ENCODE measurements at regions of chr17 and their contacts with region 1.

Region 1: DNA sequence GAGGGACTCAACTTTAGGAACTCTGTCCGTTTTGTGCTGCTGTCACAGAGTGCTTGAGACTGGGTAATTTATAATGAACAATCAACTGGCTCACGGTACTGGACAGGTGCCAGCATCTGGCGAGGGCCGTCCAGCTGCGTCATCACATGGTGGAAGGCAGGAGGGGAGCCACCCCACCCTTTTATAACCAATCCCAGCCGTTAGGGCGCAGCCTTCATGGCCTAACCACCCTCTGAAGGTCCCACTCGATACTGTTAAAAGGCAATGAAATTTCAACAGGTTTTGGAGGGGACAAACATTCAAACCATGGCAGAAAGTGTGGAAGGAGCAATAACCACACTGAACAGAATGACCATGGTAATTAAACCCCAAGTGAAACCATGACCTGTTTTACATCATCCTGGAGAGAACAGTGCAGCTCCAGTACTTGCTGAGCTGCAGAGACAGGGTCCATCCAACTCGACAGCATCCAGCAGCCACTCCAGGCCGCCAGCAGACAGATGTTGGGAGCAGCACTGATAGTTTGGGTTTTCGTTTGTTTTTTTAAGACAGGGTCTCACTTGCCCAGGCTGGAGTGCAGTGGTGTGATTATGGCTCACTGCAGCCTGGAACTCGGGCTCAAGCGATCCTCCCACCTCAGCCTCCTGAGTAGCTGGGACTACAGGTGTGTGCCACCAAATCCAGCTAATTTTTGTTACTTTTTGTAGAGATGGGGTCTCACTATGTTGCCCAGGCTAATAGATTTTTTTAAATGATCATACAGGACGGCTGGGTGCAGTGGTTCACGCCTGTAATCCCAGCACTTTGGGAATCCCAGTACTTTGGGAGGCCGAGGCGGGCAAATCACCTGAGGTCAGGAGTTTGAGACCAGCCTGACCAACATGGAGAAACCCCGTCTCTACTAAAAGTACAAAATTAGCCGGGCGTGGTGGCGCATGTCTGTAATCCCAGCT is 11.0 kb downstream of the CHMP6 start:
- DNase-seq: peak; percentile 79 to 84 (median 82)
- ATAC-seq: peak; percentile 71
- H3K4me3 ChIP-seq: no peak overlapping the region
- H3K27ac ChIP-seq: peak overlapping the region; percentile 44
- H3K4me1 ChIP-seq: peaks cover 19 to 60% of the 10 kb centered on the region in 2 experiments
- H3K27me3 ChIP-seq: no peaks in the 10 kb centered on the region
- CTCF ChIP-seq: no peak
- EP300 ChIP-seq: no peak
- POLR2A ChIP-seq: 0 out of 2 replicates have a peak, but pooled peaks have one; percentile 39
- RAD21 ChIP-seq: no peak

Region 2: GRCh38 chr17:80414508-80414802 is 588.2 kb before region 1 on chr17:
- CTCF ChIA-PET with region 1: no interaction called
- POLR2A ChIA-PET with region 1: no interaction called
- in situ Hi-C with region 1: no loop called
- intact Hi-C with region 1: no loop called
- DNase-seq: peak; percentile 26 to 38 (median 31)
- ATAC-seq: peak; percentile 22
- H3K4me3 ChIP-seq: peak overlapping the region; percentile 59
- H3K27ac ChIP-seq: no peak overlapping the region
- H3K4me1 ChIP-seq: peaks cover 3 to 19% of the 10 kb centered on the region in 2 experiments; a peak in 4 of 5 replicates
- H3K27me3 ChIP-seq: peaks cover 7 to 16% of the 10 kb centered on the region in 2 experiments; a peak in 4 of 5 replicates
- CTCF ChIP-seq: peak; percentile 26 to 35 (median 34); a peak in 3 of 6 replicates
- EP300 ChIP-seq: no peak
- POLR2A ChIP-seq: no peak
- RAD21 ChIP-seq: peak in 1 of 2 experiments; percentile 38; a peak in 1 of 4 replicates

Region 3: GRCh38 chr17:81018044-81018802 is 15.5 kb after region 1 on chr17:
- CTCF ChIA-PET with region 1: no interaction called
- POLR2A ChIA-PET with region 1: interaction called, 13 read pairs
- in situ Hi-C with region 1: no loop called
- intact Hi-C with region 1: loop called (anchors 1 kb)
- DNase-seq: peak; percentile 55 to 92 (median 74)
- ATAC-seq: peak; percentile 92
- H3K4me3 ChIP-seq: peak overlapping the region; percentile 53
- H3K27ac ChIP-seq: peak overlapping the region; percentile 92
- H3K4me1 ChIP-seq: peaks cover 41 to 46% of the 10 kb centered on the region in 2 experiments
- H3K27me3 ChIP-seq: no peaks in the 10 kb centered on the region
- CTCF ChIP-seq: no peak
- EP300 ChIP-seq: peak; percentile 84
- POLR2A ChIP-seq: peak; percentile 86
- RAD21 ChIP-seq: no peak

Region 4: DNA sequence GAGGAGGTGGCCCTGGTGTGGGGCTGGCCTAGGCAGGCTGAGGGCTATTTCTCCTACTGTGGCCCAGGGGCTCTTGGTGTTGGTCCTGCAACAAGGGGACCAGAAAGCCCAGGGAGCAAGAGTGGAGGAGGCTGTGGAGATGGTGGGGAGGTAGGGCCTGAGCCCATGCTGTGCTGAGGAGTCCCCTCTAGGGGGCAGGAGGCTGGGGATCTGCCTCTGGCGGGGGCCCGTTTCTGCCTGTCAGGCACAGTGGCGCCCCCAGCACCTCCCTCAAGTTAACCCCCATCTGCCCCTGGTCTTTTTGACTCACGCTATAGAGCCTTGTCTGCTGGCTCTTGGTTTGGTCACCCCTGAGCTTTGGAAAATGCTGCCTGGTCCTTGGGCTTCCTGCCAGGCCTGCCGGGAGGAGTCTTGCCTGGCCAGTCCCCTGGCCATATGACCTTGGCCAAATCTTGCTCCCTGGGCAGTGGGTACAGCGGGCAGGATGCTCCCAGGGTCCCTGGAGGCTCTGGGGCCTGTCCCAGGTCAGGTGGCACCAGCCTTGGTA is 38.2 kb after region 1 on chr17:
- CTCF ChIA-PET with region 1: no interaction called
- POLR2A ChIA-PET with region 1: no interaction called
- in situ Hi-C with region 1: no loop called
- intact Hi-C with region 1: no loop called
- DNase-seq: peak; percentile 65 to 83 (median 72)
- ATAC-seq: peak; percentile 95
- H3K4me3 ChIP-seq: no peak overlapping the region; the same call in 1 of the 2 replicates
- H3K27ac ChIP-seq: no peak overlapping the region
- H3K4me1 ChIP-seq: peaks cover 19 to 84% of the 10 kb centered on the region in 2 experiments
- H3K27me3 ChIP-seq: no peaks in the 10 kb centered on the region
- CTCF ChIP-seq: peak; percentile 84 to 96 (median 85)
- EP300 ChIP-seq: no peak
- POLR2A ChIP-seq: no peak
- RAD21 ChIP-seq: peak in 1 of 2 experiments; percentile 64; a peak in 2 of 4 replicates

Region 5: GRCh38 chr17:81228420-81228819 is 225.7 kb after region 1 on chr17:
- CTCF ChIA-PET with region 1: no interaction called
- POLR2A ChIA-PET with region 1: no interaction called
- in situ Hi-C with region 1: loop called (anchors 5 kb)
- intact Hi-C with region 1: no loop called
- DNase-seq: no peak
- ATAC-seq: no peak
- H3K4me3 ChIP-seq: no peak overlapping the region
- H3K27ac ChIP-seq: no peak overlapping the region
- H3K4me1 ChIP-seq: peaks cover 12 to 42% of the 10 kb centered on the region in 2 experiments
- H3K27me3 ChIP-seq: no peaks in the 10 kb centered on the region
- CTCF ChIP-seq: no peak
- EP300 ChIP-seq: no peak
- POLR2A ChIP-seq: no peak
- RAD21 ChIP-seq: no peak

Region 6: DNA sequence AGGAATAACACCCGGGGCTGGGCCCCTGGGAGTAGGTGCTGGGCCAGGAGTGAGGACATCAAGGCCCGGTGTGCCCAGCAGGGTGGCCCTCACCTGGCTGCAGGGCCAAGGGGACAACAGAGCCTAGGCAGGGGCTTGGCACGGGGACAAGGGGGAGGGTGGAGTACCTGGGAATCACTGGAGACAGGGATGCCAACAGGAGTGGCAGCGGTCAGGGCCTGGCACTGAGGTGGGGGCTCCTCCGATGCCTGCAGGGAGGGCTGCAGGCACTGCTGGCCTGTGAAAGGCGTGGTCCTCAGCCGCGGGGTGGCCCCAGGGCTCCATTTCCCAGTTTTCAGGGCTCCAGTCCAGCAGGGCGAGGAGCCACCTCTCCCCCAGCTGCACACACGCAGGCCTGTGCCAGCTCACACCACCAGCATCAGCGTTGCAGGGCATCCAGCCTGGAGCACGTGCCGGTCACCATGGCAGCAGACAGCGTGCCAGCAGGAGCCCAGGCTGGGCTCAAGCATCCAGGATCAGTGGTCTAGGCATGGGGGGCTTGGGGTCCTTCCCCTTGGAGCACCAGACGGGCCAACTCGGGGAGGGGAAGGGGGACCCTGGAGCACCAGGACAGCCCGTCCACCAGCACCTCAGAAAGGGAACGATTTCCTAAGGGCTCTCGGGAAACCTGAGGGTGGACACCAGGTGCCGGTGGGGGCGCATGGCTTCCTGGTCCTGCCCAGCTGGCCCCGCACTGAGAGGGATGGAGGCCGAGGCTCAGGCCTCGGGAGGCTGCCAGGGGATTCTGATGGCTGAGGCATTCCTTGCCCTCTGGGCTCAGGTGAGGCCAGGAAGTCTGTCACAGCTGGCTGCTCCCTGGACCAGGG is 521.0 kb after region 1 on chr17:
- CTCF ChIA-PET with region 1: no interaction called
- POLR2A ChIA-PET with region 1: no interaction called
- in situ Hi-C with region 1: no loop called
- intact Hi-C with region 1: no loop called
- DNase-seq: no peak
- ATAC-seq: no peak
- H3K4me3 ChIP-seq: no peak overlapping the region
- H3K27ac ChIP-seq: no peak overlapping the region
- H3K4me1 ChIP-seq: peaks cover 5 to 68% of the 10 kb centered on the region in 2 experiments; a peak in 4 of 5 replicates
- H3K27me3 ChIP-seq: peaks cover 0 to 35% of the 10 kb centered on the region in 2 experiments; a peak in 3 of 5 replicates
- CTCF ChIP-seq: 0 out of 6 replicates have a peak, but pooled peaks of 1 of the 3 experiments have one; percentile 6
- EP300 ChIP-seq: no peak
- POLR2A ChIP-seq: no peak
- RAD21 ChIP-seq: no peak